ENCODE measurements at regions of chr9 and their contacts with region 1.

Region 1: GRCh38 chr9:73067074-73067473 is 84.6 kb upstream of the ANXA1 start:
- DNase-seq: no peak
- H3K4me3 ChIP-seq: no peak overlapping the region
- H3K27ac ChIP-seq: no peak overlapping the region
- H3K4me1 ChIP-seq: no peaks in the 10 kb centered on the region
- H3K27me3 ChIP-seq: no peaks in the 10 kb centered on the region
- CTCF ChIP-seq: peak; percentile 49

Region 2: DNA sequence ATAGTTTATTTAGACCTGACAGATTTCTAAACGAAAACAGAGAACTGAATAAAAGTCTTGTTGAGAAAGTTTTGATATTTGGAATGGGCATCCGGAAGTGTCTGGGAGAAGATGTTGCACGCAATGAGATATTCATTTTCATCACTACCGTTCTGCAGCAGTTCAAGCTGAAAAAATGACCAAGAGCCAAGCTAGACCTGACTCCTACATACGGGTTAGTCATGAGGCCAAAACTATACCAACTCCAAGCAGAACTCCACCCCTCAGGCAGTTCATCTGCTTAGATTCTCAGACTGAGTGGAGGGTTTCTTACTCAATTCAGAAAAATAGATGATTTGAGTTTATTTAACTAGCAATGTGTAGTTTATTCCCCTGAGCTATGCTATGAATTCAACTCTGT is 10.8 kb before region 1 on chr9:
- CTCF ChIA-PET with region 1: no interaction called
- POLR2A ChIA-PET with region 1: no interaction called
- intact Hi-C with region 1: loop called (anchors 1 kb)
- DNase-seq: no peak
- H3K4me3 ChIP-seq: no peak overlapping the region
- H3K27ac ChIP-seq: no peak overlapping the region
- H3K4me1 ChIP-seq: peaks cover 12% of the 10 kb centered on the region
- H3K27me3 ChIP-seq: no peaks in the 10 kb centered on the region
- CTCF ChIP-seq: no peak

Region 3: DNA sequence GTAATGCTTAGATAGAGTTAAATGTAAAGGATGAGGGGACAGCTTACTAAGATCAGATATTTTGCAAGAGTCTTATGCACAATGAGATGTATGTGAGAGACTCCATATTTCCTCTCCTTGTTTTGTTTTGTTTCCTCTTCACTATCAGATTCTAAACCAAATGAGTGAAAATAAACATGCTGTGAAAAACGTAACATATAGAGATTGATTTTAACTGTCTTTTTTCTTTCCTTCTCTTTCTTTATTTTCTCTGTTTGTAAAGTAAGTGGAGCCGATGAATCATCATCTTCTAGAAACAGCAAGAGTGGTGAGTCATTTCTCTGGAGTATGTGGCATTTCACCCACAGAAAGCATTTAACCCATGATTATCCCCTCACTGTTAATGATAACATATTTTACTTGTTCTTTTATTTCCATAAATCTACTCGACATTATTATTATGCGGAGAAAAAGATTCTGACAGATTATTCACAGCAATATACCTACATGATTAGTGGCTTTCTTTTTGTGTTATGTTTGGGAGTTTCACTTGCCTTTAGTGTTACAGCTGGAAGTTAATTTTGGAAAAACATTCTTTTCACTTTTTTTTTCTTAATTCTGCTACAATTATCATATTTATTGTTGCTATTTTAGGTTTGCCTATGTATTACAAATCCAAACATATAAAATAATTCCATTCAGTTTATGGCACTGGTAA is 82.4 kb after region 1 on chr9:
- CTCF ChIA-PET with region 1: no interaction called
- POLR2A ChIA-PET with region 1: no interaction called
- intact Hi-C with region 1: no loop called
- DNase-seq: peak; percentile 77
- H3K4me3 ChIP-seq: peak overlapping the region; percentile 18
- H3K27ac ChIP-seq: peak overlapping the region; percentile 90
- H3K4me1 ChIP-seq: peaks cover 63% of the 10 kb centered on the region
- H3K27me3 ChIP-seq: no peaks in the 10 kb centered on the region
- CTCF ChIP-seq: no peak